MCF 10A (cell line): ENCODE measurements at regions of chr2 and their contacts with region 1.

Region 1: DNA sequence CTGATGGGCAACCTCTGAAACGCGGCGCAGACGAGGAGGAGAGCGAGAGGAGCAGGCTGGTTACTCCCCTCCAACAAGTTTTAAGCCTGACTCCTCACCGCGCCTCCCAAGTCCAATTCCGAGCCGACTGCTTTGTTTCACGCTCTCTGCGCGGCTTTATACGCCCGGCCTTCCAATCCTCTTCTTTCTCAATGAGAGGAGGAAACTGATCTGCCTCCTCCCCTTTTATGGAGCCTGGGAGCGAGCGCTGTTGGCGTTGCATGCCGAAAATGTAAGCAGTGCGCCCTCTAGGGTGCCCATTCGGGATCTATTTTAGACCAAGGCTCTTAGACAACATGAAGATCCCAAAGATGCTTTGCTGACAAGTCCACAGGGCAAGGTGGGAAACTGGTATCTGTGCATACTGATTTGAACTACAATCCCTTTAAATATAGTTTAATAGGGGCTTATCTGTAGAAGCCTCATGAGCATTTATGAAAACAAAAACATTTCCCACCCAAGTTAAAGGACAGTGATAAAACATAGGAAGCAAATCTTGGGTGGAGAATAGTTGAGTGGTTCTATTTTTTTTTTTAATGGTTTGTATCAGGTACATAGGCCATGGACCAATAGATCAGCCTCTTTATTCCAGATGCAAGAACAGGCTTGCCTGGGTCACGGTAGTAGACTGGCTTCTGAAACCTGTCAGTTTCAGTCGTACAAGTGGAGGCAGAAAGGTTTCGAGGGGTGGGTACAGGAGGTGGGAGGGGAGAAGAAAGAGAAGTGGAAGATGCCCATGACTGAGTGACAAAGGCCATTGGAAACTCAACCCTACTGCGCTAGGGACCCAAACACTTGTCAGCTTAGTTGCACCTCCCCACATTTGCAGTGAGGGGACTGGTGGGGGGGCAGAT is at the start of gene RND3:
- DNase-seq: peak; percentile 99
- H3K4me3 Mint-ChIP-seq: peak within 1 kb of the TSS; percentile 98
- H3K27ac Mint-ChIP-seq: peak within 1 kb of the TSS; percentile 97
- H3K4me1 Mint-ChIP-seq: peaks cover 20% of the 10 kb centered on the region
- H3K27me3 Mint-ChIP-seq: no peaks in the 10 kb centered on the region
- CTCF ChIP-seq: peak; percentile 79
- total RNA-seq, gene RND3: 158 and 182 TPM in 2 replicates

Region 2: GRCh38 chr2:149587220-149587949 is 900.4 kb before region 1 on chr2 and contains the start of gene MMADHC:
- CTCF ChIA-PET with region 1: no interaction called
- POLR2A ChIA-PET with region 1: interaction called, 41 read pairs
- intact Hi-C with region 1: no loop called
- DNase-seq: peak; percentile 95
- H3K4me3 Mint-ChIP-seq: peak within 1 kb of the TSS; percentile 93
- H3K27ac Mint-ChIP-seq: peak within 1 kb of the TSS; percentile 99
- H3K4me1 Mint-ChIP-seq: peaks cover 21% of the 10 kb centered on the region
- H3K27me3 Mint-ChIP-seq: no peaks in the 10 kb centered on the region
- CTCF ChIP-seq: no peak
- total RNA-seq, gene MMADHC: 151 and 156 TPM in 2 replicates

Region 3: GRCh38 chr2:149799013-149799705 is 688.6 kb before region 1 on chr2:
- CTCF ChIA-PET with region 1: interaction called, 20 read pairs
- POLR2A ChIA-PET with region 1: interaction called, 10 read pairs
- intact Hi-C with region 1: loop called (anchors 1 kb)
- DNase-seq: peak; percentile 42
- H3K4me3 Mint-ChIP-seq: no peak overlapping the region
- H3K27ac Mint-ChIP-seq: no peak overlapping the region
- H3K4me1 Mint-ChIP-seq: no peaks in the 10 kb centered on the region
- H3K27me3 Mint-ChIP-seq: no peaks in the 10 kb centered on the region
- CTCF ChIP-seq: peak; percentile 33

Region 4: GRCh38 chr2:150188177-150188576 is 299.6 kb before region 1 on chr2:
- CTCF ChIA-PET with region 1: interaction called, 3 read pairs
- POLR2A ChIA-PET with region 1: interaction called, 30 read pairs
- intact Hi-C with region 1: loop called (anchors 2 kb)
- DNase-seq: peak; percentile 51
- H3K4me3 Mint-ChIP-seq: peak overlapping the region; percentile 4
- H3K27ac Mint-ChIP-seq: peak overlapping the region; percentile 60
- H3K4me1 Mint-ChIP-seq: peaks cover 20% of the 10 kb centered on the region
- H3K27me3 Mint-ChIP-seq: no peaks in the 10 kb centered on the region
- CTCF ChIP-seq: no peak

Region 5: DNA sequence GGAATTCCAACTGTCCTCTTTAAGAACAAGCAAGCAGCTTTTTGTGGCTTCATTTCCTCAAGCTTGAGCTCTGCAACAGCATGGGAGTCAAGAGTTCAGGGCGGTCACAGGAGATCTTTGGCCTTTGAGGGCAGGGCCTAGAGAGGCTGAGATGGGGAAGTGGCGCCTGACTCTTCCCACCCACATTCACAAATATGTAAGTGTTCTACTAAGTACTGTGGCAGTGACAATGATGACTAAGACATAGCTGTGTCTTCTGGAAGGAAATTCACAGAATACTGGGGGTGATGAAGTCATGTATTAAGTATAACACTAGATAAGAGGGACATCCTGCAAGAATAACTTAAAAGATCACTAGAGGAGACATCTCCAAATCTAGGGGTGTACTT is 15.3 kb before region 1 on chr2:
- CTCF ChIA-PET with region 1: interaction called, 6 read pairs
- POLR2A ChIA-PET with region 1: interaction called, 106 read pairs
- intact Hi-C with region 1: no loop called
- DNase-seq: no peak
- H3K4me3 Mint-ChIP-seq: no peak overlapping the region
- H3K27ac Mint-ChIP-seq: peak overlapping the region; percentile 97
- H3K4me1 Mint-ChIP-seq: peaks cover 57% of the 10 kb centered on the region
- H3K27me3 Mint-ChIP-seq: no peaks in the 10 kb centered on the region
- CTCF ChIP-seq: no peak

Region 6: GRCh38 chr2:150610671-150611279 is 123.0 kb after region 1 on chr2:
- CTCF ChIA-PET with region 1: interaction called, 5 read pairs
- POLR2A ChIA-PET with region 1: interaction called, 8 read pairs
- intact Hi-C with region 1: loop called (anchors 1 kb)
- DNase-seq: peak; percentile 74
- H3K4me3 Mint-ChIP-seq: no peak overlapping the region
- H3K27ac Mint-ChIP-seq: no peak overlapping the region
- H3K4me1 Mint-ChIP-seq: peaks cover 10% of the 10 kb centered on the region
- H3K27me3 Mint-ChIP-seq: no peaks in the 10 kb centered on the region
- CTCF ChIP-seq: peak; percentile 82

Region 7: GRCh38 chr2:151051574-151052220 is 563.9 kb after region 1 on chr2:
- CTCF ChIA-PET with region 1: interaction called, 3 read pairs
- POLR2A ChIA-PET with region 1: interaction called, 4 read pairs
- intact Hi-C with region 1: loop called (anchors 2 kb)
- DNase-seq: peak; percentile 73
- H3K4me3 Mint-ChIP-seq: no peak overlapping the region
- H3K27ac Mint-ChIP-seq: no peak overlapping the region
- H3K4me1 Mint-ChIP-seq: peaks cover 16% of the 10 kb centered on the region
- H3K27me3 Mint-ChIP-seq: no peaks in the 10 kb centered on the region
- CTCF ChIP-seq: peak; percentile 76